ENCODE measurements at regions of chr19 and their contacts with region 1.

Region 1: GRCh38 chr19:40465557-40466150 is at the start of gene BLVRB:
- DNase-seq: peak; percentile 100
- ATAC-seq: peak; percentile 92
- H3K4me3 Mint-ChIP-seq: peak within 1 kb of the TSS; percentile 79
- H3K27ac Mint-ChIP-seq: peak within 1 kb of the TSS; percentile 78
- H3K4me1 Mint-ChIP-seq: peaks cover 16% of the 10 kb centered on the region
- H3K27me3 Mint-ChIP-seq: peaks cover 38% of the 10 kb centered on the region
- CTCF ChIP-seq: no peak
- total RNA-seq, gene BLVRB: 35.1 to 38.5 TPM (median 37.1 TPM) in 3 replicates

Region 2: DNA sequence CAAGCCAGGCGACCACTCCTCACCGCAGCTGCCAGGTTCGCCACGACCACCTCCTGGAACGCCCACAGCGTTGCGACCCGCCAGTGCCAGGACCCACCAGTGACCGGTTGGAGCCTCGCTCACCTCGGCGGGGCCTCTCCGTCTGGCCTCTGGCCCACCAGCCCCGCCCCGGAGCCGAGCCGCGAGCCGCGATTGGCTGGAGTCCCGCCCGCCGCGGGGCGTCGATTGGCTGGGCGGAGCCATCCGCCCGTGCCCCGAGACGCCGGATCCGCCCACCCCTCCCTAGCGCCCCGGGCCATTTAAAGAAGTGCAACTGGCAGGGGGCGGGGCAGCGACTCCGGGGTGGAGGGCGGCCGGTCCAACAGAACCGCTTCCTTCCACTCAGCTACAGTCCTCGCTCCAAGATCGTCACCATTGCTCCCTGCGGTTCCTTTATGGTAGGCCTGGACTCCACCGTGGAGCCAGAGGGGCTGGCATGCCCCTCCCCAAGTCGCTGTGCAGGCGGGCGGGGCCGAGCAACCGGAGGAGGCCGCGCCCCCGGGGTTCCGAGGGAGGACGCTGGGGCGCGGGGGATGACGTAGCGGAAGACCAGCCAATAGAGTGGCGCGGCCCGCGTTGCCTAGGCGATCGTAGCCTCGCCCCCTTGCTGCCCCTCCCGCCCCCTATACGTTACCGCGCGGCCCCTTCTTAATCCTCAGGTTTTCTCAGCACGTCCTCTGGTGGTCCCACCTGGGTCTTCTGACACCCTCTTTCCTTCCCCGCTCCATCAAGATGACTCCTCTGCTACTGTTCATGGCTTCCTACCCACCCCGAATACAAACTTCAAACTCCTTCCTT is 21.2 kb before region 1 on chr19 and contains the start of gene SERTAD3:
- CTCF ChIA-PET with region 1: interaction called, 40 read pairs
- POLR2A ChIA-PET with region 1: interaction called, 12 read pairs
- DNase-seq: peak; percentile 97
- ATAC-seq: peak; percentile 68
- H3K4me3 Mint-ChIP-seq: peak within 1 kb of the TSS; percentile 94
- H3K27ac Mint-ChIP-seq: peak within 1 kb of the TSS; percentile 99
- H3K4me1 Mint-ChIP-seq: peaks cover 27% of the 10 kb centered on the region
- H3K27me3 Mint-ChIP-seq: no peaks in the 10 kb centered on the region
- CTCF ChIP-seq: no peak
- total RNA-seq, gene SERTAD3: 31.9 to 34.6 TPM (median 33.6 TPM) in 3 replicates

Region 3: GRCh38 chr19:40489882-40490230 is 24.2 kb after region 1 on chr19:
- CTCF ChIA-PET with region 1: interaction called, 34 read pairs
- POLR2A ChIA-PET with region 1: interaction called, 9 read pairs
- DNase-seq: no peak
- ATAC-seq: no peak
- H3K4me3 Mint-ChIP-seq: no peak overlapping the region
- H3K27ac Mint-ChIP-seq: no peak overlapping the region
- H3K4me1 Mint-ChIP-seq: peaks cover 5% of the 10 kb centered on the region
- H3K27me3 Mint-ChIP-seq: peaks cover 67% of the 10 kb centered on the region
- CTCF ChIP-seq: no peak

Region 4: DNA sequence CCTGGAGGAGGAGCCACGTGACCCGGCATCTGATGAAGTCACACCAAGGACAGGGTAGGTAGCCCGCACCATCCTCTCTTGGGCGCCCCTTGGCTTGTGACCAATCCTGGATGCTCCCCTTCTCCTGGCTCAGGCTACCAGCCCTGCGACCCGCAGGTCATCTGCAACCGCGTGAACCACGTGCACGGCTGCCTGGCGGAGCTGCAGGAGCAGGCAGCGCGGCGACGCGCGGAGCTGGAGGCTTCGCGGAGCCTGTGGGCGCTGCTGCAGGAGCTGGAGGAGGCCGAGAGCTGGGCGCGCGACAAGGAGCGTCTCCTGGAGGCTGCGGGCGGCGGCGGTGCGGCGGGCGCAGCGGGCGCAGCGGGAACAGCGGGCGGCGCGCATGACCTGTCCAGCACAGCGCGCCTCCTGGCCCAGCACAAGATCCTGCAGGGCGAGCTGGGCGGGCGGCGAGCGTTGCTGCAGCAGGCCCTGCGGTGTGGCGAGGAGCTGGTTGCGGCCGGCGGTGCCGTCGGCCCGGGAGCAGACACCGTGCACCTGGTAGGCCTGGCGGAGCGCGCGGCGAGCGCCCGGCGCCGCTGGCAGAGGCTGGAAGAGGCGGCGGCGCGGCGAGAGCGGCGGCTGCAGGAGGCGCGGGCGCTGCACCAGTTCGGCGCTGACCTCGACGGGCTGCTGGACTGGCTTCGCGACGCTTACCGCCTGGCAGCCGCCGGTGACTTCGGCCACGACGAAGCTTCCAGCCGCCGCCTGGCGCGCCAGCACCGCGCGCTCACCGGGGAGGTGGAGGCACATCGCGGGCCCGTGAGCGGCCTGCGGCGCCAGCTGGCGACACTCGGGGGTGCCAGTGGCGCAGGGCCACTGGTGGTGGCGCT is 47.1 kb after region 1 on chr19:
- CTCF ChIA-PET with region 1: interaction called, 12 read pairs
- POLR2A ChIA-PET with region 1: interaction called, 7 read pairs
- DNase-seq: peak; percentile 67
- ATAC-seq: peak; percentile 69
- H3K4me3 Mint-ChIP-seq: peak overlapping the region; percentile 56
- H3K27ac Mint-ChIP-seq: no peak overlapping the region
- H3K4me1 Mint-ChIP-seq: 0 out of 2 replicates have a peak, but pooled peaks cover 3% of the 10 kb centered on the region
- H3K27me3 Mint-ChIP-seq: peaks cover 94% of the 10 kb centered on the region
- CTCF ChIP-seq: no peak

Region 5: GRCh38 chr19:40542202-40542859 is 76.7 kb after region 1 on chr19:
- CTCF ChIA-PET with region 1: interaction called, 10 read pairs
- POLR2A ChIA-PET with region 1: no interaction called
- DNase-seq: no peak
- ATAC-seq: no peak
- H3K4me3 Mint-ChIP-seq: no peak overlapping the region
- H3K27ac Mint-ChIP-seq: no peak overlapping the region
- H3K4me1 Mint-ChIP-seq: no peaks in the 10 kb centered on the region
- H3K27me3 Mint-ChIP-seq: peaks cover 31% of the 10 kb centered on the region
- CTCF ChIP-seq: no peak

Region 6: DNA sequence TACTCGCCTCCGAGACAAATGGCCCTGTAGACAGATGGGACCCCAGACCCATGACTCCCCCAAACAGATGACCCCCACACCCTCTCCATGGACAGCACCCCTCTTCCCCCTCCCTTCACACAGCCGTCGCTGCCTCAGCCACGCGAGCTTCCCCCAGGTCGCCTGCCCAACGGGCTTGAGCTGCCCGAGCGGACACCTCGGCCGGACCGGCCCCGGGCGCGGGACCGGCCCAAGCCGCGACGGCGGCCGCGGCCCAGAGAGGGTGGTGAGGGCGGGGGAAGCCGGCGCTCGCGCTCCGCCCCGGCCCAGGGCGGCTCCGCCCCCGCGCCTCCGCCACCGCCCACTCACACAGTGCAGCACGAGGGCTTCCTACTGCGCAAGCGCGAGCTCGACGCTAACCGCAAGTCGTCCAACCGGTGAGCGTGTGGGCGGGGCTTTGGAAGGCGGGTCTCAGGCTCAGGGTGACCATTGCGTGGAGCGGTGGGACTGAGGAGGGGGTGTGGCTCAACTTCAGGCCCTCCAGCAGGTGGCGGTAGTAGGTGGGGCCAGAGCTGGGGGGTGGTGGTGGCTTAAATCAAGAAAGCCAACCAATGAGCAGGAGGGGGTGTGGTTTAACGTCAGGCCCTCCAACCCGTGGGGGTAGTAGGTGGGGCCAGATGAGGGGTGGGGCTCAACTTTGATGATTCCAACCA is 104.8 kb after region 1 on chr19:
- CTCF ChIA-PET with region 1: interaction called, 10 read pairs
- POLR2A ChIA-PET with region 1: interaction called, 3 read pairs
- DNase-seq: peak; percentile 100
- ATAC-seq: peak; percentile 96
- H3K4me3 Mint-ChIP-seq: peak overlapping the region; percentile 75
- H3K27ac Mint-ChIP-seq: no peak overlapping the region; the same call in 1 of the 2 replicates
- H3K4me1 Mint-ChIP-seq: peaks cover 15% of the 10 kb centered on the region
- H3K27me3 Mint-ChIP-seq: peaks cover 78% of the 10 kb centered on the region
- CTCF ChIP-seq: no peak

Region 7: GRCh38 chr19:40813182-40813958 is 347.7 kb after region 1 on chr19:
- CTCF ChIA-PET with region 1: no interaction called
- POLR2A ChIA-PET with region 1: no interaction called
- DNase-seq: no peak
- ATAC-seq: no peak
- H3K4me3 Mint-ChIP-seq: peak overlapping the region; percentile 89
- H3K27ac Mint-ChIP-seq: peak overlapping the region; percentile 61; the same call in 1 of the 2 replicates
- H3K4me1 Mint-ChIP-seq: peaks cover 31% of the 10 kb centered on the region
- H3K27me3 Mint-ChIP-seq: peaks cover 51% of the 10 kb centered on the region
- CTCF ChIP-seq: no peak